ENCODE measurements at regions of chr7 and their contacts with region 1.

Region 1: GRCh38 chr7:2157468-2158279 is 75.1 kb downstream of the MAD1L1 start:
- DNase-seq: no peak
- ATAC-seq: no peak
- H3K4me3 ChIP-seq: no peak overlapping the region
- H3K27ac ChIP-seq: no peak overlapping the region
- H3K4me1 ChIP-seq: peaks cover 47% of the 10 kb centered on the region
- H3K27me3 ChIP-seq: no peaks in the 10 kb centered on the region
- CTCF ChIP-seq: no peak
- EP300 ChIP-seq: no peak
- POLR2A ChIP-seq: no peak
- RAD21 ChIP-seq: no peak

Region 2: DNA sequence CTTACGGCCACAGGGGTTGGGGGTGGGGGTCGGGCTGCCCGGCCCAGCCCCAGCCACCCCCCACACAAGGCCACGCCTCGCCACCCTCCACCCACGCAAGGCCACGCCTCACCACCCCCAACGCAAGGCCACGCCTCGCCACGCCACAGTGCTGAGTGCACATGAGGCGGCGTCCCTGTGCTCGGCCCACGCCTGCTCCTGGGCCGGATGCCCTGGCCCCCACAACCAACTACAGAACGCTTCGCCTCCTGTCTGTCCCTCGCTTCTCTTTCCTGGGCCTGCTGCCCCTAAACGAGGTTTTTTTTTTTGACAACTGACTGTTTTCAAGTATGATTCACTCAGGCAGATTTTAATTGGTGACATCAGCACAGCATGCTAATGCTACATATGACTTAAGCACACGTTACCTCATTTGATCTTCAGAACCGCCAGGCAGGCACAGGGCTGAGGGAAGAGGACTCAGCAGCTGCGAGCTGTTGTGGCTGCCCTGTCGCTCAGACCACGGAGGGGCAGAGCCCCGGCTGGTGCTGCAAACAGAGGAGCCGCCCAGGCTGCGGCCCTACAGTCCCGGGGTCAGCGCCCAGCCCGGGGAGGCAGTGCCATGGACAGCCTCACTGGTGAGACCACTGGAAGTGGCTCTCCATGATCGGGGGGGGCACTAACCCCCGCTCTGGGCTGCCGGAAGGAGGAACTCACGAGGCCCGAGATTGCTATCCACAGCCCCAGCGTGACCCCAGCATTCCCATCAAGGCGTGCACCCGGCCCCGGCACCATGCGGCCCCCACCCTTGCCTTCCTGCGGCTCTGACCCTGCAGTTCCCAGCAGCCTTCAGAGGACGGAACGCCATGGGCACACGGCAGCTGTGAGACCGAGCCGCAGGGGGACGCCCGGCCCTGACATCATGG is 137.8 kb before region 1 on chr7:
- CTCF ChIA-PET with region 1: no interaction called
- POLR2A ChIA-PET with region 1: no interaction called
- in situ Hi-C with region 1: no loop called
- intact Hi-C with region 1: no loop called
- DNase-seq: no peak
- ATAC-seq: no peak
- H3K4me3 ChIP-seq: no peak overlapping the region
- H3K27ac ChIP-seq: no peak overlapping the region
- H3K4me1 ChIP-seq: peaks cover 23% of the 10 kb centered on the region
- H3K27me3 ChIP-seq: no peaks in the 10 kb centered on the region
- CTCF ChIP-seq: no peak
- EP300 ChIP-seq: no peak
- POLR2A ChIP-seq: no peak
- RAD21 ChIP-seq: no peak

Region 3: GRCh38 chr7:2104107-2104710 is 53.5 kb before region 1 on chr7:
- CTCF ChIA-PET with region 1: no interaction called
- POLR2A ChIA-PET with region 1: no interaction called
- in situ Hi-C with region 1: no loop called
- intact Hi-C with region 1: loop called (anchors 10 kb)
- DNase-seq: peak; percentile 51
- ATAC-seq: peak; percentile 55
- H3K4me3 ChIP-seq: no peak overlapping the region
- H3K27ac ChIP-seq: no peak overlapping the region
- H3K4me1 ChIP-seq: peaks cover 36% of the 10 kb centered on the region
- H3K27me3 ChIP-seq: no peaks in the 10 kb centered on the region
- CTCF ChIP-seq: peak; percentile 62
- EP300 ChIP-seq: no peak
- POLR2A ChIP-seq: no peak
- RAD21 ChIP-seq: peak; percentile 53; the same call in 1 of the 2 replicates

Region 4: GRCh38 chr7:2567679-2568278 is 410.1 kb after region 1 on chr7:
- CTCF ChIA-PET with region 1: no interaction called
- POLR2A ChIA-PET with region 1: no interaction called
- in situ Hi-C with region 1: no loop called
- intact Hi-C with region 1: no loop called
- DNase-seq: peak; percentile 42
- ATAC-seq: peak; percentile 92
- H3K4me3 ChIP-seq: peak overlapping the region in 2 of 3 experiments; percentile 26 to 55; a peak in 3 of 6 replicates
- H3K27ac ChIP-seq: no peak overlapping the region
- H3K4me1 ChIP-seq: peaks cover 19% of the 10 kb centered on the region
- H3K27me3 ChIP-seq: no peaks in the 10 kb centered on the region
- CTCF ChIP-seq: peak; percentile 89
- EP300 ChIP-seq: no peak
- POLR2A ChIP-seq: no peak
- RAD21 ChIP-seq: peak; percentile 71